ENCODE measurements at regions of chr9 and their contacts with region 1.

Region 1: GRCh38 chr9:27726244-27727081 is 153.2 kb upstream of the C9orf72 start:
- DNase-seq: peak; percentile 52 to 95
- H3K4me3 ChIP-seq: no peak overlapping the region
- H3K27ac ChIP-seq: no peak overlapping the region
- H3K4me1 ChIP-seq: peaks cover 0 to 19% (median 0%) of the 10 kb centered on the region in 4 donors
- H3K27me3 ChIP-seq: no peaks in the 10 kb centered on the region
- CTCF ChIP-seq: peak in 5 of 7 experiments; percentile 47 to 78 (median 62)
- EP300 ChIP-seq: no peak
- POLR2A ChIP-seq: no peak

Region 2: DNA sequence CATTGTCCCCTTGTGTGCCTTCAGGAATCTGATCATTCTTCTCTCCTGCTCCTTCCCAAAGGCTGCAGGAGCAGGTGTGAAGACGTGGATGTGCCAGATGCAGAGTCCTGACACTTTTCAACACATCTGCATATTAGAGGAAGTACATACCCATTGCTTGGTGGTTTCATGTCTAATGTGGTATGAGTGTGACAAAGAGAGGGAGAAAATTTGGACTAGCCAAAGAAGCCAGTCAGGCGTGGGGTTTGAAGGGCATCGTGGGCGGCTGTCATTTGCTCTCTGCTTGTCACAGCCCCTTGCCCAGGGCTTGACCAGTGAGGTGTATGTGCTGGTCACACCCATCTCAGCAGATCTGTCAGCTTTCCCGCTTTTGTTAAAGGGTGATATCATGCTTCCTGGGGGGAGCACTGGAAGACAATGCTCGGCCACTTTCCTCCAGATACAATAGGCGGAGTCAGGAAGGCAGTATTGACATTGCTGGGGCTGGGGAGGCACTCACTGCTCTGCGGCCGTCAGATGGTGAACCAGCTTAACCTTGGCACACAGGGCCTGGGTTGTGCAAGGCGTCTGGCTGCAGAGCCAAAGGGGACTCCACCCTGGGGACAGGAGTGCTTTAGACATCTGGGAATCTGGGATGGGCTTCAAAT is 608.9 kb before region 1 on chr9:
- intact Hi-C with region 1: no loop called
- DNase-seq: peak; percentile 70 to 89
- H3K4me3 ChIP-seq: no peak overlapping the region
- H3K27ac ChIP-seq: peak overlapping the region; percentile 20 to 74 (median 36)
- H3K4me1 ChIP-seq: peaks cover 0 to 13% (median 2%) of the 10 kb centered on the region in 4 donors
- H3K27me3 ChIP-seq: no peaks in the 10 kb centered on the region
- CTCF ChIP-seq: no peak
- EP300 ChIP-seq: no peak
- POLR2A ChIP-seq: no peak

Region 3: GRCh38 chr9:28073270-28073669 is 346.8 kb after region 1 on chr9:
- intact Hi-C with region 1: loop called (anchors 10 kb)
- DNase-seq: peak; percentile 54 to 83
- H3K4me3 ChIP-seq: no peak overlapping the region
- H3K27ac ChIP-seq: no peak overlapping the region
- H3K4me1 ChIP-seq: no peaks in the 10 kb centered on the region
- H3K27me3 ChIP-seq: no peaks in the 10 kb centered on the region
- CTCF ChIP-seq: peak in 4 of 7 experiments; percentile 28 to 47 (median 35)
- EP300 ChIP-seq: no peak
- POLR2A ChIP-seq: no peak

Measured in stomach (tissue), 19 donors.